ENCODE measurements at regions of chr1 and their contacts with region 1.

Region 1: GRCh38 chr1:51519048-51519864 is at the start of gene EPS15:
- DNase-seq: peak; percentile 82
- H3K4me3 Mint-ChIP-seq: peak within 1 kb of the TSS; percentile 98
- H3K27ac Mint-ChIP-seq: peak within 1 kb of the TSS; percentile 98
- H3K4me1 Mint-ChIP-seq: peaks cover 61% of the 10 kb centered on the region
- H3K27me3 Mint-ChIP-seq: no peaks in the 10 kb centered on the region
- total RNA-seq, gene EPS15: 53.0 and 55.5 TPM in 2 replicates

Region 2: GRCh38 chr1:50968158-50968820 is 551.0 kb before region 1 on chr1:
- intact Hi-C with region 1: loop called (anchors 10 kb)
- DNase-seq: peak; percentile 82
- H3K4me3 Mint-ChIP-seq: peak overlapping the region; percentile 99
- H3K27ac Mint-ChIP-seq: peak overlapping the region; percentile 98
- H3K4me1 Mint-ChIP-seq: peaks cover 39% of the 10 kb centered on the region
- H3K27me3 Mint-ChIP-seq: peaks cover 10% of the 10 kb centered on the region

Region 3: GRCh38 chr1:51131185-51131584 is 388.1 kb before region 1 on chr1:
- intact Hi-C with region 1: no loop called
- DNase-seq: no peak
- H3K4me3 Mint-ChIP-seq: no peak overlapping the region
- H3K27ac Mint-ChIP-seq: no peak overlapping the region
- H3K4me1 Mint-ChIP-seq: no peaks in the 10 kb centered on the region
- H3K27me3 Mint-ChIP-seq: peaks cover 12% of the 10 kb centered on the region

Region 4: GRCh38 chr1:51506537-51506936 is 12.7 kb before region 1 on chr1:
- intact Hi-C with region 1: loop called (anchors 1 kb)
- DNase-seq: no peak
- H3K4me3 Mint-ChIP-seq: no peak overlapping the region
- H3K27ac Mint-ChIP-seq: no peak overlapping the region
- H3K4me1 Mint-ChIP-seq: peaks cover 34% of the 10 kb centered on the region
- H3K27me3 Mint-ChIP-seq: no peaks in the 10 kb centered on the region

Region 5: DNA sequence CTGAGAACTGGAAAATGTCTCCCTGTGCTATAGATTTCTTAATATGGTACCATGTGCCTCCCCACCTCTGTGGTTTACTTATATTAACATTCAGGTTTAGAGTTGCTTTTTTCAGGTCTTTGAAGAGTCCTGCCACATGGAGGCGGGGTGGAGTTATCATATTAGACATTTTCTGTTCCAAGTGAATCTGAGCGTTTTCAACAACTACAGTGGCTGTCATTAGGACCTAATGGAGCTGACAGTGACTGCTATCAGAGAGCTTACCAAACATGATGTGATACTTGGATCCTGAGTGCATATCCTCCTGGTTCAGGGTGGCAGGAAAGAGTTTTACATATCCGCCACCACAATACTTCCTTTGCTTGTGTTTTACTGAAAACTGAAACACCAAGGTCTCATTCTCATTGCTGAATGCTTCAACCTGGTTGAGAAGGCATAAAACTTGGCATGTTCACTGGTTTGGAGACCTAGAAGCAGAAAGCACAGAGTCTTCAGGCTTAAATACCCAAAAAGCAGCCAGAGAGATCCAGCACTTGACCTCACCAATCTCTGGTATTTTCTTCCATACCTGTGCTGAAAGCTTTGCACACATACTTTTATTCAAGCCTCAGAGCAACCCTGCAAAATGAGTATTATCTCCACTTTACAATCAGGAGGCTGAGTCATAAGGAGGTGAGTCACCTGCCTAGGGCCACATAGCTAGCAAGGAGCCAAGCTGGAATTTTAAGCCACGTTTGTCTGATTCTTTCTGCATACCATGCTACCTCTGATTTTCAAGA is 50.2 kb after region 1 on chr1:
- intact Hi-C with region 1: loop called (anchors 2 kb)
- DNase-seq: peak; percentile 29
- H3K4me3 Mint-ChIP-seq: peak overlapping the region; percentile 38
- H3K27ac Mint-ChIP-seq: peak overlapping the region; percentile 90
- H3K4me1 Mint-ChIP-seq: no peaks in the 10 kb centered on the region
- H3K27me3 Mint-ChIP-seq: no peaks in the 10 kb centered on the region

Region 6: GRCh38 chr1:51768971-51769588 is 249.8 kb after region 1 on chr1:
- intact Hi-C with region 1: loop called (anchors 2 kb)
- DNase-seq: no peak
- H3K4me3 Mint-ChIP-seq: no peak overlapping the region
- H3K27ac Mint-ChIP-seq: no peak overlapping the region
- H3K4me1 Mint-ChIP-seq: peaks cover 8% of the 10 kb centered on the region
- H3K27me3 Mint-ChIP-seq: no peaks in the 10 kb centered on the region

Region 7: GRCh38 chr1:52098139-52098871 is 579.0 kb after region 1 on chr1:
- intact Hi-C with region 1: no loop called
- DNase-seq: no peak
- H3K4me3 Mint-ChIP-seq: no peak overlapping the region
- H3K27ac Mint-ChIP-seq: no peak overlapping the region
- H3K4me1 Mint-ChIP-seq: peaks cover 12% of the 10 kb centered on the region
- H3K27me3 Mint-ChIP-seq: peaks cover 5% of the 10 kb centered on the region

Region 8: GRCh38 chr1:52726265-52727113 is 1207.2 kb after region 1 on chr1 and contains the start of gene ZYG11B:
- intact Hi-C with region 1: loop called (anchors 10 kb)
- DNase-seq: peak; percentile 88
- H3K4me3 Mint-ChIP-seq: peak within 1 kb of the TSS; percentile 88
- H3K27ac Mint-ChIP-seq: peak within 1 kb of the TSS; percentile 82
- H3K4me1 Mint-ChIP-seq: peaks cover 42% of the 10 kb centered on the region
- H3K27me3 Mint-ChIP-seq: no peaks in the 10 kb centered on the region
- total RNA-seq, gene ZYG11B: 8.4 and 8.5 TPM in 2 replicates